A549 (cell line): ENCODE measurements at regions of chr2 and their contacts with region 1.

Region 1: DNA sequence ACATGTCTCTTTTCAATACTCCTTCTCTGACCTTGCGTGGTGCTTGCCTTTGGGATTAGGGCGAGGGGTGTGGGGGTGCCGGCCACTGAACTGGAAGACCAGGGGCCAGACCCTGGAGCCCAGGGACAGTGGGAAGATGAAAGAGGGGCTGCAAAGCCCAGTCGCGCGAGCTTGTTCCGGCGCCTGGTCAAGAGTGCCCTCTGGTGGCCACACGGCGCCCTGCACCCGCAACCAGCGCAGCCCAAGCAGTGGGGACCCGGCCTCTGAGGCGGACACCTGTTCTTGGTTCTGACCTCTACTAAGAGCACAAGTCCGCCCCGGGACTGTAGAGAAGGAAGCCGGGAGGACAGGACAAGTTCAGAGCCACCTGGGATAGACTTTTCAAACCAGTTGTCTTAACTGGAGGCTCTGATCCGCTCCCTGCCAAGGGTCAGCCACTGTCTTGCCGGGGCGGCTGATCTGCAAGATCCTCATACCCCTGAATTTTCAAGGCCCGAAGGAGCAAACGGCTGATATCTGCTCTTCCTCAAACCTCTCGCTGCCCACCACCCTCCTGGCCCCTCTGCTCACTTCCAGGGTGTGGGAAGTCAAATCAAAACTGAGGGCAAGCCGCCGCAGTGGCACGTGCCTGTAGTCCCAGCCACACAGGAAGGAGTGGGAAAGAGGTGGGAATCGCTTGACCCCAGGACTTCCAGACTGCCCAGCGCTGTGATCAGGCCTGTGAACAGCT is 14.9 kb upstream of the MSH6 start:
- DNase-seq: peak; percentile 55 to 67
- ATAC-seq: peak; percentile 87 to 94
- H3K4me3 ChIP-seq: no peak overlapping the region
- H3K27ac ChIP-seq: peak overlapping the region in 1 of 2 experiments; percentile 58; a peak in 2 of 6 replicates
- H3K4me1 ChIP-seq: no peaks in the 10 kb centered on the region
- CTCF ChIP-seq: peak; percentile 98
- EP300 ChIP-seq: no peak
- POLR2A ChIP-seq: no peak
- RAD21 ChIP-seq: peak; percentile 96 to 99

Region 2: GRCh38 chr2:47429795-47430194 is 338.2 kb before region 1 on chr2:
- CTCF ChIA-PET with region 1: interaction called, 170 read pairs
- POLR2A ChIA-PET with region 1: no interaction called
- DNase-seq: peak in 1 of 2 experiments; percentile 17
- ATAC-seq: peak in 1 of 2 experiments; percentile 65; a peak in 3 of 6 replicates
- H3K4me3 ChIP-seq: no peak overlapping the region
- H3K27ac ChIP-seq: no peak overlapping the region
- H3K4me1 ChIP-seq: peaks cover 4% of the 10 kb centered on the region; the same call in 1 of the 3 replicates
- CTCF ChIP-seq: no peak
- EP300 ChIP-seq: no peak
- POLR2A ChIP-seq: no peak
- RAD21 ChIP-seq: no peak

Region 3: GRCh38 chr2:47488869-47489584 is 279.0 kb before region 1 on chr2:
- CTCF ChIA-PET with region 1: interaction called, 19 read pairs
- POLR2A ChIA-PET with region 1: interaction called, 3 read pairs
- DNase-seq: peak; percentile 44 to 74
- ATAC-seq: peak; percentile 90 to 93
- H3K4me3 ChIP-seq: no peak overlapping the region
- H3K27ac ChIP-seq: peak overlapping the region; percentile 6 to 64; a peak in 3 of 6 replicates
- H3K4me1 ChIP-seq: peaks cover 26% of the 10 kb centered on the region
- CTCF ChIP-seq: no peak
- EP300 ChIP-seq: no peak
- POLR2A ChIP-seq: no peak
- RAD21 ChIP-seq: no peak

Region 4: DNA sequence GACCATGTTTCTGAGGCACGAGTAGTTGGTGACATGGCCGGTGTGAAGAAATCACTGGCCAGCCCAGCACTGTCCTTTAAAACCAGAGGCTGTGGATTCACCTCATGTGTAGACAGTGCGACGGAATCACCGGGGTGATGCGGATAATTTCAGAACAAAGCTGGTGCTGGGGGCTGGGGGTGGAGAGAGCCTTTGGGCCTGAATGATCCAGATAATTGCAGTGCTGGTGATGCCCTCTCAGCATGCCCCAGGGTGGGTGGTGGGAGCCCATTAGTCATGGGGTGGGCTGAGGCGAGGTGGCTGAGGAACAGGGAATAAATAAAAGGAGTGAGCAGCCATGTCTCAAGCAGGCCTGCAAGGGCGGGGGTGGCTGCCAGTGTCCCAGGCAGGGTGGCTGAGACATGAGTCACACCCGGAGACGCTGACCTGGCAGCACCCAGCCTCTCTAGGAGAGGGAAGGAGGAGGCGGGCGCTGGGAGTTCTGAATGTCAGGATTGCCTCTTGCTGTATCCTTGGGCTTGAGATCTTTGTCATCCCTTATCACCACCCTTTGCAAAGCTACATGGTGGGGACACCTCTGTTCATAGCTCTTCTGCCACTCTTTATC is 136.2 kb before region 1 on chr2:
- CTCF ChIA-PET with region 1: interaction called, 10 read pairs
- POLR2A ChIA-PET with region 1: no interaction called
- DNase-seq: peak; percentile 72 to 97
- ATAC-seq: peak; percentile 96 to 97
- H3K4me3 ChIP-seq: no peak overlapping the region
- H3K27ac ChIP-seq: peak overlapping the region; percentile 60 to 83
- H3K4me1 ChIP-seq: peaks cover 16% of the 10 kb centered on the region
- CTCF ChIP-seq: no peak
- EP300 ChIP-seq: no peak
- POLR2A ChIP-seq: no peak
- RAD21 ChIP-seq: no peak

Region 5: GRCh38 chr2:47751875-47752357 is 16.1 kb before region 1 on chr2:
- CTCF ChIA-PET with region 1: interaction called, 45 read pairs
- POLR2A ChIA-PET with region 1: no interaction called
- DNase-seq: no peak
- ATAC-seq: peak in 1 of 2 experiments; percentile 22; a peak in 2 of 6 replicates
- H3K4me3 ChIP-seq: no peak overlapping the region
- H3K27ac ChIP-seq: no peak overlapping the region
- H3K4me1 ChIP-seq: no peaks in the 10 kb centered on the region
- CTCF ChIP-seq: no peak
- EP300 ChIP-seq: no peak
- POLR2A ChIP-seq: no peak
- RAD21 ChIP-seq: no peak

Region 6: GRCh38 chr2:47917276-47917961 is 149.4 kb after region 1 on chr2:
- CTCF ChIA-PET with region 1: no interaction called
- POLR2A ChIA-PET with region 1: no interaction called
- DNase-seq: no peak
- ATAC-seq: no peak
- H3K4me3 ChIP-seq: no peak overlapping the region
- H3K27ac ChIP-seq: no peak overlapping the region
- H3K4me1 ChIP-seq: no peaks in the 10 kb centered on the region
- CTCF ChIP-seq: no peak
- EP300 ChIP-seq: no peak
- POLR2A ChIP-seq: no peak
- RAD21 ChIP-seq: no peak